Activated T-helper 1 cell treated with anti-CD3 and anti-CD28 coated beads, Interleukin-12 subunit alpha, Interleukin-12 subunit beta, Interleukin-2, Interleukin-4 antibody, amounts not matched to agents 30 ng/mL and 10 ng/mL and 1 ng/mL, durations not matched to agents 14 hours and 24 hours and 36 hours (primary cell): ENCODE measurements at regions of chr6 and their contacts with region 1.

Region 1: DNA sequence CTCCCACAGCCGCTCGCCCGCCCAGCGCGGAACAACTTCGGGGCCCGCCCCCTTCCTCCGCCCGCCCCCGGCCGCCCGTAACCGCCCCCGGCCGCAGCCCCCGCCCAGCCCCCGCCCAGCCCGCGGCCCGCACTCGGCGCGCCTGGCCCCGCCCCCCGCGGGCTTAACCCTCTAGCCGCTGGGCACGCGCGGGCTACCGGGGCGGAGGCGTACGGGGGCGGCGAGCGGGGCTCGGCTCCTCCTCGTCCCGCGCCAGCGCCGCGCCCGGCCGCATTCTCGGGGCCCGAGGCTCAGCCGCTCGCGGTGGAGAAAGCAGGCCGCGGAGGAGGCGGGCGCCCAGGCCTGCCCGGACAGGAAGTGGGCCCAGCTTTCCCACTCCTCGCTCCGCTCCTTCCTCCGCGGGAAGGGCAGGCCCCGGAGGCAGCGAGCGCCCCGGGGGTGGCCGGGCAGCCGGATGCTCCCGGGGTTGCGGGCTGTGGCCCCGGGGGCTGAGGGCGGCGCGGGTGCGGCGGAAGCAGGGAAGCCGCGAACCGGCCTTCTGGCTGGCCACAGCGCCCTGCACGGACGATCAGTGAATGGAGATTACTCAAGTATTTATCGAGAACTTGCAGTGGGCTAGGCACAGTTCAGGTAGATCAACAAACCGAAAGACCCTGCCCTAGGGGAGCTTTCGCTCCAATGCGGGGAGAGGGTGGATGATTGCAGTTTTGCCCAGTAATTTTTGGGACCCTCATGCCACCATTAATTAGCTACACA is at the start of gene TRAM2:
- DNase-seq: peak; percentile 69
- H3K4me3 Mint-ChIP-seq: peak within 1 kb of the TSS; percentile 79
- H3K27ac Mint-ChIP-seq: peak within 1 kb of the TSS; percentile 66
- H3K4me1 Mint-ChIP-seq: peaks cover 39% of the 10 kb centered on the region
- H3K27me3 Mint-ChIP-seq: peaks cover 14% of the 10 kb centered on the region
- total RNA-seq, gene TRAM2: 2.1 and 2.5 TPM in 2 replicates

Region 2: GRCh38 chr6:52389626-52390360 is 187.4 kb before region 1 on chr6:
- intact Hi-C with region 1: no loop called
- DNase-seq: peak; percentile 45
- H3K4me3 Mint-ChIP-seq: peak overlapping the region; percentile 66
- H3K27ac Mint-ChIP-seq: peak overlapping the region; percentile 88
- H3K4me1 Mint-ChIP-seq: peaks cover 62% of the 10 kb centered on the region
- H3K27me3 Mint-ChIP-seq: peaks cover 4% of the 10 kb centered on the region

Region 3: GRCh38 chr6:52491203-52492069 is 85.8 kb before region 1 on chr6:
- intact Hi-C with region 1: loop called (anchors 5 kb)
- DNase-seq: no peak
- H3K4me3 Mint-ChIP-seq: no peak overlapping the region
- H3K27ac Mint-ChIP-seq: no peak overlapping the region
- H3K4me1 Mint-ChIP-seq: peaks cover 28% of the 10 kb centered on the region
- H3K27me3 Mint-ChIP-seq: peaks cover 10% of the 10 kb centered on the region

Region 4: GRCh38 chr6:52537001-52537753 is 40.0 kb before region 1 on chr6:
- intact Hi-C with region 1: loop called (anchors 1 kb)
- DNase-seq: no peak
- H3K4me3 Mint-ChIP-seq: peak overlapping the region; percentile 19
- H3K27ac Mint-ChIP-seq: peak overlapping the region; percentile 56
- H3K4me1 Mint-ChIP-seq: peaks cover 38% of the 10 kb centered on the region
- H3K27me3 Mint-ChIP-seq: no peaks in the 10 kb centered on the region